Endothelial cell of umbilical vein (primary cell): ENCODE measurements at regions of chr9 and their contacts with region 1.

Region 1: DNA sequence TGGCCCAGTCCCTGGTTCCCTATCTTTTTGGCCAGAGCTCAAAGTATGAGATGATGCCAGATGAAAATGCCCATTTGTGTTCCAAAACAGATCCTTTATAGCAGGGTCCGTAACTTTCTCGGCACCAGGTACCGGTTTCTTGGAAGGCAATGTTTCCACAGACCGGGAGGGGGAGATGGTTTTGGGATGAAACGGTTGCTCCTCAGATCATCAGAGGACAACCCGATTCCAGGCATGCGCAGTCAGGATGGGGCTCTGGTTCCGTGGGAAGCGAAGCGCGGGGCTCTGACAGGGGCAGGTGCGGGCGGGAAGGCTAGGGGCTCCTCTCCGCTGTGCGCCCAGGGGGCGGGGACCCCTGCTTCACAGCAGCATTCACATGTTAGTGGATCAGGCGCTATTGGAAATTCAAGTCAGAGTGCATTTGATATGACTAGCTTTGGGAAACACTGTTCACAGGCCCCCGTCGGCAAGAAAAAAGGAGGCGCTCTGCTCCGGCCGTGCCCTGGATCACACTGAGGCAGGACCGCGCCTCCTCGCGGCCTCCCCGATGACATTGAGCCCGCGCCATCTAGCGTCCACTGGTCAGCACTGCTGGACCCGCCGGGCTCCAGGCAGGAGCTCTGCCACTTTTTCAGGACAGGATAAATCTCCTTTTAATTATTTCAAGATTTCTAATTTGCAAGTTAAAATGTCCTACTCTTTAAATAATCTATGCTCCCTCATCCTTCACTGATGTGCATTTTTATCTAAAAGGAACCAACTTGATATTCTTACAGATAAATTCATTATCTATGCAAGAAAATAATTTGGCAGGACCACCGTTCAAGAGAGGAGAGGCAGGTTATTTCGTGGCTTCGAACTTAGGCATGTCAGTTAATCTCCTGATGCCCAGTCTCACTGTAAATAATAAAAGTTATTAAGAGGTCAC is 190.0 kb downstream of the FANCC start:
- DNase-seq: peak; percentile 78
- H3K4me3 ChIP-seq: peak overlapping the region in 2 of 3 experiments; percentile 33 to 46
- H3K27ac ChIP-seq: no peak overlapping the region
- H3K4me1 ChIP-seq: no peaks in the 10 kb centered on the region
- H3K27me3 ChIP-seq: no peaks in the 10 kb centered on the region
- CTCF ChIP-seq: peak; percentile 97 to 99
- POLR2A ChIP-seq: no peak

Region 2: GRCh38 chr9:94656200-94656599 is 471.3 kb before region 1 on chr9:
- CTCF ChIA-PET with region 1: interaction called, 6 read pairs
- POLR2A ChIA-PET with region 1: no interaction called
- dilution Hi-C with region 1: loop called (anchors 25 kb)
- intact Hi-C with region 1: no loop called
- DNase-seq: no peak
- H3K4me3 ChIP-seq: no peak overlapping the region
- H3K27ac ChIP-seq: no peak overlapping the region
- H3K4me1 ChIP-seq: no peaks in the 10 kb centered on the region
- H3K27me3 ChIP-seq: peaks cover 10 to 12% of the 10 kb centered on the region in 2 experiments
- CTCF ChIP-seq: no peak
- POLR2A ChIP-seq: no peak

Region 3: GRCh38 chr9:94697972-94698581 is 429.4 kb before region 1 on chr9:
- CTCF ChIA-PET with region 1: interaction called, 13 read pairs
- POLR2A ChIA-PET with region 1: no interaction called
- dilution Hi-C with region 1: no loop called
- intact Hi-C with region 1: no loop called
- DNase-seq: no peak
- H3K4me3 ChIP-seq: no peak overlapping the region
- H3K27ac ChIP-seq: no peak overlapping the region
- H3K4me1 ChIP-seq: no peaks in the 10 kb centered on the region
- H3K27me3 ChIP-seq: peaks cover 3 to 13% of the 10 kb centered on the region in 2 experiments
- CTCF ChIP-seq: no peak
- POLR2A ChIP-seq: no peak

Region 4: DNA sequence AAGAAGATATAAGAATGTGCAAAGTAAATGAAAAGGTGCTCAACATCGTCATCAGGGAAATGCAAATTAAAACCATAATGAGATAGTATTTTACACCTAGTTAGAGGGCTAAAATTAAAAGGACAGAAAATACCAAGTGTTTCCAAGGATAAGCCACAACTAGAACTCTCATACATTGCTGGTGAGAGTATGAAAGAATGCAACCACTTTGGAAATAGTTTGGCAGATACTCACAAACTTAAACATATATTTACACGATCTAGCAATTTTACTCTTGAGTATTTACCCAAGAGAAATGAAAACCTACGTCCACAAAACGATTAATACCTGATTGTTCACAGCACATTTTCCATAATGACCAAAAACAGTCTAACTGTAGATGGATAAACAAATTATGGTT is 349.5 kb before region 1 on chr9:
- CTCF ChIA-PET with region 1: interaction called, 134 read pairs
- POLR2A ChIA-PET with region 1: no interaction called
- dilution Hi-C with region 1: no loop called
- intact Hi-C with region 1: loop called (anchors 1 kb)
- DNase-seq: no peak
- H3K4me3 ChIP-seq: no peak overlapping the region
- H3K27ac ChIP-seq: no peak overlapping the region
- H3K4me1 ChIP-seq: no peaks in the 10 kb centered on the region
- H3K27me3 ChIP-seq: no peaks in the 10 kb centered on the region
- CTCF ChIP-seq: no peak
- POLR2A ChIP-seq: no peak

Region 5: GRCh38 chr9:95025213-95026147 is 102.0 kb before region 1 on chr9:
- CTCF ChIA-PET with region 1: interaction called, 13 read pairs
- POLR2A ChIA-PET with region 1: no interaction called
- dilution Hi-C with region 1: no loop called
- intact Hi-C with region 1: no loop called
- DNase-seq: peak; percentile 89
- H3K4me3 ChIP-seq: peak overlapping the region in 1 of 3 experiments; percentile 20
- H3K27ac ChIP-seq: peak overlapping the region; percentile 7
- H3K4me1 ChIP-seq: peaks cover 38% of the 10 kb centered on the region
- H3K27me3 ChIP-seq: no peaks in the 10 kb centered on the region
- CTCF ChIP-seq: peak in 1 of 2 donors; percentile 33
- POLR2A ChIP-seq: no peak

Region 6: DNA sequence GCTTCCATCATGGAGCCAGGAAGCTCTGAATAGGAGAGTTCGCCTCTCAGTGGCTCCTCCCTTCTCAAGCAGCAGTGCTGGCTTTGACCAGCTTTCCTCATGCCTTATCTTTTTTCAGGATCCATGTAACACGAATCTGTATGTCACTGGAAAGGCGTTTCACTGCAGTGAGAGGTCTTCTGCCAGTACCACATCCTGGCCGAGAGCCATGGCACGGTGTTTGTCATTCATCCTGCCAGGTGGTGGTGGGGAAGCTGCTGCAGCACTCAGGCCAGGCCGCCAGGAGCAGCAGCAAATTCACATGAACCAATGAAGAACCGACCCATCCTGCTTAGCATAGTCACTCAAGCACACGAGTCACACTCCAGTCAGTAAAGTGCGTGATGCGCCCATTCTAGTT is 11.0 kb after region 1 on chr9:
- CTCF ChIA-PET with region 1: interaction called, 22 read pairs
- POLR2A ChIA-PET with region 1: no interaction called
- dilution Hi-C with region 1: no loop called
- intact Hi-C with region 1: no loop called
- DNase-seq: peak; percentile 9
- H3K4me3 ChIP-seq: no peak overlapping the region
- H3K27ac ChIP-seq: no peak overlapping the region
- H3K4me1 ChIP-seq: no peaks in the 10 kb centered on the region
- H3K27me3 ChIP-seq: no peaks in the 10 kb centered on the region
- CTCF ChIP-seq: no peak
- POLR2A ChIP-seq: no peak

Region 7: DNA sequence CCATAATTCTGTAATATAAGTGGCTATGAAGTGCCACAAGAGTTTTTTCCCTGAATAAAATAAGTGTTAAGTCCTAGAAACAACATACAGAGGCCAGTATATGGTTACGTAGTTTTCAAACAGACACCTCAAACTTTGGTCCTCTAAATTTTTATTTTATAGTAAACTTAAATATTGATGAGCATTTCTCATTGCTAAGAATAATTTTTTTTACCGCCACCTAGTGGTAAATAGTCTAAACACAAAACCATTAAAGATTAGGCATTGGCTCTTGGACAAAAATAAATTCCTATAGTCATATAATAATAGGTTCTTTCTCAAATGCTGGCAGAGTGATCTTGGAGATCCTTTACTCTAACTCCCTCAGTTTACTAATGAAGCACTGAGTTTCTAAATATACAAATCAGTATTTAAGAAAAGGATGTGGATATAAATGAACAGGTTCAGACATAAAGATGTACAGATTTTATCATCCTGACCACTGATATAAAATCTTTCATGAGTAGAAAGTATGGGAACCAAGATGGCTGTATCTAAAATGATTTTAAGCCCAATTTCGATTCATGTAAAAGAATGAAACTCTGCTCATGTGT is 53.8 kb after region 1 on chr9:
- CTCF ChIA-PET with region 1: interaction called, 12 read pairs
- POLR2A ChIA-PET with region 1: no interaction called
- dilution Hi-C with region 1: no loop called
- intact Hi-C with region 1: no loop called
- DNase-seq: peak; percentile 38
- H3K4me3 ChIP-seq: no peak overlapping the region
- H3K27ac ChIP-seq: no peak overlapping the region
- H3K4me1 ChIP-seq: no peaks in the 10 kb centered on the region
- H3K27me3 ChIP-seq: no peaks in the 10 kb centered on the region
- CTCF ChIP-seq: peak; percentile 4 to 15
- POLR2A ChIP-seq: no peak

Region 8: GRCh38 chr9:95399261-95399660 is 271.7 kb after region 1 on chr9:
- CTCF ChIA-PET with region 1: no interaction called
- POLR2A ChIA-PET with region 1: no interaction called
- dilution Hi-C with region 1: no loop called
- intact Hi-C with region 1: no loop called
- DNase-seq: no peak
- H3K4me3 ChIP-seq: no peak overlapping the region
- H3K27ac ChIP-seq: no peak overlapping the region
- H3K4me1 ChIP-seq: no peaks in the 10 kb centered on the region
- H3K27me3 ChIP-seq: no peaks in the 10 kb centered on the region
- CTCF ChIP-seq: no peak
- POLR2A ChIP-seq: no peak